Activated CD4-positive, alpha-beta memory T cell treated with anti-CD3 and anti-CD28 coated beads for 36 hours (primary cell): ENCODE measurements at regions of chr7 and their contacts with region 1.

Region 1: GRCh38 chr7:142853739-142854371 is 1.0 kb upstream of the EPHB6 start:
- DNase-seq: peak; percentile 73
- H3K4me3 Mint-ChIP-seq: peak overlapping the region; percentile 93
- H3K27ac Mint-ChIP-seq: peak overlapping the region; percentile 72
- H3K4me1 Mint-ChIP-seq: peaks cover 16% of the 10 kb centered on the region
- H3K27me3 Mint-ChIP-seq: peaks cover 3% of the 10 kb centered on the region

Region 2: GRCh38 chr7:142714375-142714774 is 139.5 kb before region 1 on chr7:
- CTCF ChIA-PET with region 1: no interaction called
- POLR2A ChIA-PET with region 1: no interaction called
- intact Hi-C with region 1: no loop called
- DNase-seq: peak; percentile 45
- H3K4me3 Mint-ChIP-seq: peak overlapping the region; percentile 36
- H3K27ac Mint-ChIP-seq: peak overlapping the region; percentile 58
- H3K4me1 Mint-ChIP-seq: peaks cover 52% of the 10 kb centered on the region
- H3K27me3 Mint-ChIP-seq: no peaks in the 10 kb centered on the region

Region 3: DNA sequence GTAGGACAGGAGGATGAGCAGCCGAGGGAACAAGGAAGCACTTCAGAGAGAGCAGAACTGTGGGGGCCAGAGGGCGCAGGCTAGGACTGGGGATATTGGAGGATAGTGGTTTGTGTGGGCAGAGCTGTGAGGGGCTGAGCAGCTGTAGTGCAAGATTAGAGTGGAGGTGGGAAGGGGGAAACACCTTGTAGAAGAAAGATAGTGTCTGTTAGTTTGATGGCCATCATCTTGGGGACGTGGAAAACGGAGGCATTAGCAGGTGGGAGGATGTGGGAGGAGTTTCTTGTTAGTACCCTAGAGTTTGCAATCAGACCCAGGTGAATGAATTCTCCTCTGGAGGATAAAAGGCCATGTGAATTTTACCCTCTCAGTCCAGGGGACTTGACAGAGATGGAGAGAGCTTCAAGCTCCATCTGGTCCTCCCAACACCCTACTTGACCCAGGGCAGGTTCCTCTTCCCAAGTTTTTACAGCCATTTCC is 49.1 kb before region 1 on chr7:
- CTCF ChIA-PET with region 1: no interaction called
- POLR2A ChIA-PET with region 1: no interaction called
- intact Hi-C with region 1: no loop called
- DNase-seq: peak; percentile 62
- H3K4me3 Mint-ChIP-seq: peak overlapping the region; percentile 35
- H3K27ac Mint-ChIP-seq: peak overlapping the region; percentile 100
- H3K4me1 Mint-ChIP-seq: peaks cover 98% of the 10 kb centered on the region
- H3K27me3 Mint-ChIP-seq: no peaks in the 10 kb centered on the region

Region 4: DNA sequence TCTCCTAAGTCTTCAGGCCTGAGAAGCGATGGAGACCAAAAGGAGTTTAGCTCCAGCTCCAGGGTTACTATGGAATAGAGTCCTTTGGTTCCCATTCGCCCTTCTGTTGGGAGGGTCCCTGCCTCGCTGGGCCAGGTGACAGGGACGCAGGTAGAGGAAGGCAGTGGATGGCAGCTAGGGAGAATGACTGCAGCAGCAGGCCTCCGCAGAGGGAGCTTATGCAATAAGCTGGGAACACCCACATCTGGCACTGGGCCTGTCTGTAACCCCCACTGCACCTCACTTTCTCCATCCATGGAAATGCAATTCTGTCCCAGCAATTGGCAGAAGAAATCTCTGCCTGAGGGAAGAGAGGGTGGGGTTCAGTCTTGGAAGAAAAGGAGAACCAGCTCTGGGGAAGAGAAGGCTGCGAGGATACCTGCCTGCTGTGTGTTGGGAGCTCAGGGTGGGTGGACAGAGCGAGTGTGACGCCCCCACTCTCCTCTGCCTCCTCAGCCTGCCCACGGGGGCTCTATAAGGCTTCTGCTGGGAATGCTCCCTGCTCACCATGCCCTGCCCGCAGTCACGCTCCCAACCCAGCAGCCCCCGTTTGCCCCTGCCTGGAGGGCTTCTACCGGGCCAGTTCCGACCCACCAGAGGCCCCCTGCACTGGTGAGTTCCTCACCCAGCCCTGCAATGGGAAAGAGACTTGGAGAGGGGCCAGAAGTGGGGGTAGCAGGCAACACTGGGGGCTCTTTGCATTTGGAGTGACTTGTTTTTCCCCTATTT is 11.3 kb after region 1 on chr7:
- CTCF ChIA-PET with region 1: interaction called, 11 read pairs
- POLR2A ChIA-PET with region 1: no interaction called
- intact Hi-C with region 1: no loop called
- DNase-seq: no peak
- H3K4me3 Mint-ChIP-seq: no peak overlapping the region
- H3K27ac Mint-ChIP-seq: no peak overlapping the region
- H3K4me1 Mint-ChIP-seq: no peaks in the 10 kb centered on the region
- H3K27me3 Mint-ChIP-seq: no peaks in the 10 kb centered on the region

Region 5: GRCh38 chr7:142873281-142873787 is 19.5 kb after region 1 on chr7:
- CTCF ChIA-PET with region 1: interaction called, 18 read pairs
- POLR2A ChIA-PET with region 1: no interaction called
- intact Hi-C with region 1: loop called (anchors 2 kb)
- DNase-seq: peak; percentile 58
- H3K4me3 Mint-ChIP-seq: no peak overlapping the region
- H3K27ac Mint-ChIP-seq: no peak overlapping the region
- H3K4me1 Mint-ChIP-seq: no peaks in the 10 kb centered on the region
- H3K27me3 Mint-ChIP-seq: no peaks in the 10 kb centered on the region

Region 6: DNA sequence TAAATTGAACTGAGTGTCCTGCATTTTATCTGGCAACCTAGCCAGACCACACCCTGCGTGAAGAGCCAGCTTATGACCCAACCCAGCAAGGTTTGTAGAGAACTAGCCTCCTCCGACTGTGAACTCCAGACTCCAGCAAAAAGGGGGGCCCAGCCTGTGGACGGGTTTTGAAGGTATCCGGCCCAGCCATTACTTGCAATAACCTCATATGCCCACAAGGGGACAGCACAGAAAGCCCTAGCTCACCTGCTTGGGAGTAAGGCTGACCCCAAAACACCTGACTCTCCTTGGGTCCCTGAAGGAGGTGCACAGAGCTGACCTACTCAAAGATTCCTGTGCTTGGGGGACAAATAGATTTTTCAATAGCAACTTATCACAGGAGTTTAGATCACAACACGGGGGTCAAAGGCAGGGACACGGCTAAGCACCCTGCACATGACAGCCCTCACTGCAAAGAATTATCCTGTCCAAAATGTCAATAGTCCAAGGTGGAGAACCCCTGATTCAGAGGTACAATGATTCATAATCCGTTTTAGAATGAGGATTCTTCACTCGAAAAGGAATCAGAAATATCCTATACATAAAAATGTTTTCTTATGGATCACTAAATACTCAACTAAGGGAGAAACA is 27.1 kb after region 1 on chr7:
- CTCF ChIA-PET with region 1: interaction called, 5 read pairs
- POLR2A ChIA-PET with region 1: no interaction called
- intact Hi-C with region 1: loop called (anchors 1 kb)
- DNase-seq: peak; percentile 59
- H3K4me3 Mint-ChIP-seq: no peak overlapping the region
- H3K27ac Mint-ChIP-seq: no peak overlapping the region
- H3K4me1 Mint-ChIP-seq: no peaks in the 10 kb centered on the region
- H3K27me3 Mint-ChIP-seq: peaks cover 2% of the 10 kb centered on the region